K562 (cell line): ENCODE measurements at regions of chr14 and their contacts with region 1.

Region 1: DNA sequence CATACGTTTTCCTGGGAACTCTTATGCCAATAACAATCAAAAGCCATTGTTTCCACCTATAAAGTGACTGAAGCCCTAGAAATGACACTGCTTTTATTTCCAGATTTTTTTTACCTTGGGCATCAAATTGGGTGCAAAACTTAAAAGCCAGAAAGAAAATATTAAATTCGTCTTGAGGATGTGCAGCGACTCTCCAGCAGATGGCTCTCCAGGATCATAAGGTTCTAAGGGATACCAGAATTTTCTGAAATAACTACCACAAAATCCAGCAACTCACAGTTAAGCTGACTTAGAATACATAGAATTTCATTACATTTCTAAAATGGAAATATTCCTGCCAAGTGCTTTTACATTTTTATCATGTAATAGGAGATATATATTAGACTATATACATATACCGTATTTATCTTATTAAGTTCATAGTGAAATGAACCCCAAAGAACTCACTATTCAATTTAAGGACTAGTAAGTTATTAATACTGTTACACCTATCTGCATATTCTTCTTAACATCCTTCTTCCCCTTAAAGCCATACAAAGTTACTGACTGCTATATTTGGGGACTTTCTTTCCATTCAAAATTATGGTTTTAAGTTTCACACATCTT is 44.0 kb downstream of the ARMH4 start:
- DNase-seq: peak; percentile 28 to 59 (median 34)
- ATAC-seq: peak; percentile 75
- H3K4me3 ChIP-seq: no peak overlapping the region
- H3K27ac ChIP-seq: no peak overlapping the region
- H3K4me1 ChIP-seq: no peaks in the 10 kb centered on the region
- H3K27me3 ChIP-seq: no peaks in the 10 kb centered on the region
- CTCF ChIP-seq: peak; percentile 61 to 88 (median 61); a peak in 5 of 6 replicates
- EP300 ChIP-seq: no peak
- POLR2A ChIP-seq: no peak
- RAD21 ChIP-seq: peak; percentile 83 to 87

Region 2: GRCh38 chr14:58166005-58166983 is 58.2 kb after region 1 on chr14:
- CTCF ChIA-PET with region 1: interaction called, 5 read pairs
- POLR2A ChIA-PET with region 1: no interaction called
- in situ Hi-C with region 1: no loop called
- intact Hi-C with region 1: loop called (anchors 1 kb)
- DNase-seq: peak; percentile 58 to 82 (median 60)
- ATAC-seq: peak; percentile 83
- H3K4me3 ChIP-seq: no peak overlapping the region
- H3K27ac ChIP-seq: no peak overlapping the region
- H3K4me1 ChIP-seq: peaks cover 3 to 7% of the 10 kb centered on the region in 2 experiments; a peak in 2 of 5 replicates
- H3K27me3 ChIP-seq: no peaks in the 10 kb centered on the region
- CTCF ChIP-seq: peak; percentile 70 to 82 (median 80)
- EP300 ChIP-seq: no peak
- POLR2A ChIP-seq: no peak
- RAD21 ChIP-seq: peak; percentile 65 to 72

Region 3: DNA sequence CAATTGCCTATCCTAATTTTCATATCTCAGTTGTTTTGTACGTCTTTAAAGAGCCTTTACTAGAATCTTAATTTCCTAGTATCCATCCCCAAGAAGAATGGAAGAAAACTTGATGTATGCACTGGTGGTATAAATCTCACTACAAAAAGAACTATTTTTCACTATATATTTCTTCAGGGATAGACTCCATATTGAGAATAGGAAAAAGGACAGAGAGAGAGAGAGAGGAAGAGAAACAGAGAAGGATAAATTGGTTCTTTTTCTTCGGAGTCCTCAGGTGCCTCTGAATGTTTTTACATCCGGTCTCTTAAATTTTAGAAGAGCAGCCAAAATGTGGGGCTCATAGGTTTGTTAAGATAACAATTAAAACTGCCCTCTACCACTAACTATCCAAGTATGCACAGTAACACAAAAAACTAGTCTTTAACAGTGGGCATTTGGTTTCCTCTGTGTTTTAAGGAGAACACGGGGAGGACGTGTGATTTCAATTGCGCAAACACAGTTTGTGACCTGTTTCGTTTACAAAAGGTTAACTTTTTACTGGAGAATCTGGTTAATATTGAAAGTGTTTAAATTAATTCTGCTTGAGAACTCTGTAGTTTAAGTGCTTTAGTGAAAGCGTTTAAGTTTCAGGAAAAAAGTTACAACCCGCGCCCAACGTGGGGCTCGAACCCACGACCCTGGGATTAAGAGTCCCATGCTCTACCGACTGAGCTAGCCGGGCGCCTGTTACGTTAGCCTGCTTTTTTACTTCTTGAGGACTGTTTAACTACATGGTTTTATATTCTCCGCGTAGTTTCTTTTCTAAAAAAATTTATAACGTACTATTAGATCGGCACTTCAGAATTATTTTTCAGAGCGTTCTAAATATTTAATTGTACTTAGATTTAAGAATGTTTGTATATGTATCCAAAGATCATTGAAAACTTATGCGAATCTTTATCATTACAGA is 131.5 kb after region 1 on chr14:
- CTCF ChIA-PET with region 1: no interaction called
- POLR2A ChIA-PET with region 1: no interaction called
- in situ Hi-C with region 1: no loop called
- intact Hi-C with region 1: loop called (anchors 5 kb)
- DNase-seq: peak in 3 of 4 experiments; percentile 10 to 75 (median 19)
- ATAC-seq: peak; percentile 30
- H3K4me3 ChIP-seq: peak overlapping the region; percentile 57
- H3K27ac ChIP-seq: peak overlapping the region; percentile 86
- H3K4me1 ChIP-seq: peaks cover 0 to 23% of the 10 kb centered on the region in 2 experiments; a peak in 4 of 5 replicates
- H3K27me3 ChIP-seq: no peaks in the 10 kb centered on the region
- CTCF ChIP-seq: no peak
- EP300 ChIP-seq: peak; percentile 68
- POLR2A ChIP-seq: no peak
- RAD21 ChIP-seq: no peak

Region 4: GRCh38 chr14:58362798-58363412 is 254.9 kb after region 1 on chr14:
- CTCF ChIA-PET with region 1: interaction called, 14 read pairs
- POLR2A ChIA-PET with region 1: no interaction called
- in situ Hi-C with region 1: loop called (anchors 25 kb)
- intact Hi-C with region 1: loop called (anchors 2 kb)
- DNase-seq: peak in 3 of 4 experiments; percentile 4 to 16 (median 11)
- ATAC-seq: peak; percentile 79
- H3K4me3 ChIP-seq: no peak overlapping the region
- H3K27ac ChIP-seq: no peak overlapping the region
- H3K4me1 ChIP-seq: no peaks in the 10 kb centered on the region
- H3K27me3 ChIP-seq: no peaks in the 10 kb centered on the region
- CTCF ChIP-seq: peak in 2 of 3 experiments; percentile 12 to 34; a peak in 2 of 6 replicates
- EP300 ChIP-seq: no peak
- POLR2A ChIP-seq: no peak
- RAD21 ChIP-seq: peak in 1 of 2 experiments; percentile 30; a peak in 1 of 4 replicates

Region 5: DNA sequence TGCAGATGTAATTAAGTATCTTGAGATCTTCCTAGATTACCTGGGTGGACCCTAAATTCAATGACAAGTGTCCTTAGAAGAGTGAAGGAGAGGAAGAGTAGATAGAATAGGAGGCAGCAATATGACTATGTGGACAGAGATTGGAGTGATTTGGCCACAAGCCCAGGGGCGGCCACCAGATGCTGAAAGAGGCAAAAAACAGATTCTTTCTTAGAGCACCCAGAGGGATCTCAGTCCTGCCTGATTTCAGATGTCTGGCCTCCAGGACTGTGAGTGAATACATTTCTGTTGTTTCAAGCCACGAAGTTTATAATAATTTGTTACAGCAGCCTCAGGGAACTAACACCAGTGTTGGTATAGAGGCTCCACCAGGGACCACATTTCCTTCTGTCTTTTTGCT is 597.0 kb after region 1 on chr14:
- CTCF ChIA-PET with region 1: no interaction called
- POLR2A ChIA-PET with region 1: no interaction called
- in situ Hi-C with region 1: no loop called
- intact Hi-C with region 1: no loop called
- DNase-seq: no peak
- ATAC-seq: no peak
- H3K4me3 ChIP-seq: no peak overlapping the region
- H3K27ac ChIP-seq: no peak overlapping the region
- H3K4me1 ChIP-seq: no peaks in the 10 kb centered on the region
- H3K27me3 ChIP-seq: no peaks in the 10 kb centered on the region
- CTCF ChIP-seq: no peak
- EP300 ChIP-seq: no peak
- POLR2A ChIP-seq: no peak
- RAD21 ChIP-seq: no peak